ENCODE measurements at regions of chr2 and their contacts with region 1.

Region 1: DNA sequence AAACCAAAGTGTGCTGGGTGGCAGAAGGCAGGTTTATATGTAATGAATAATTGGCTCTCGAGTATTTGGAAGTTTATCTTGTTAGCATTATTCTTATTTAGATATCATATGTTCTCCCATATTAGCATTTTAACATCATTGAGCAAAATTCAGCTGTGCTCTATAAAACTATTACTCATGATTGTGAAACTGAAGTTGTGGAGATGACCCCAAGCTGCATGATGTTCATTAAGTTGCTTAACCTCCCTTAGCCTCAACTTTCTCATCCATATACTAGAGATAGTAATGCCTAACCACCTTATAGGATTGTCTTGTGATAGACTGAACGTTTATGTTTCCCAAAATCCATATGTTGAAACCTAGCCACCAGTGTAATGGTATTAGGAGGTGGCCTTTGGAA is 346.3 kb downstream of the SATB2 start:
- DNase-seq: no peak
- H3K27ac ChIP-seq: no peak overlapping the region
- CTCF ChIP-seq: no peak

Region 2: DNA sequence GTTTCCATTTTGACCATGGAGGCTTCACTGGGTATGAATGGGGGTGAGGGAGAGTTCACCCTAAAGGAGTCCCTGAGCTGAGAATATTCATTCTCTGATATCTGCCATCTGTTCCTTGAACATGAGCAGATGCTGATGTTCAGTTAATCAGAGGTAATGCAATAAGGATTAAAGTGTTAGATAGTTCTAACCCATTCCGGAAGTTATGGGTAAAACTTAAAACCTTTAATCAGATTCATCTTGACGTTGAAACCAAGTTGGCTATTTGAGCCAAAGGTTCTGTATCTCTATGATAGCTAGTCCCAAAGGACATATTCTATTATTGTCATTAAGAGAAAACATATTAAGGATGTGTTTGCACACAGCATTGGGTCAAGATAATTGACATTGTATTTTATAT is 1038.2 kb before region 1 on chr2:
- CTCF ChIA-PET with region 1: interaction called, 10 read pairs
- POLR2A ChIA-PET with region 1: no interaction called
- DNase-seq: no peak
- H3K27ac ChIP-seq: no peak overlapping the region
- CTCF ChIP-seq: no peak

Region 3: DNA sequence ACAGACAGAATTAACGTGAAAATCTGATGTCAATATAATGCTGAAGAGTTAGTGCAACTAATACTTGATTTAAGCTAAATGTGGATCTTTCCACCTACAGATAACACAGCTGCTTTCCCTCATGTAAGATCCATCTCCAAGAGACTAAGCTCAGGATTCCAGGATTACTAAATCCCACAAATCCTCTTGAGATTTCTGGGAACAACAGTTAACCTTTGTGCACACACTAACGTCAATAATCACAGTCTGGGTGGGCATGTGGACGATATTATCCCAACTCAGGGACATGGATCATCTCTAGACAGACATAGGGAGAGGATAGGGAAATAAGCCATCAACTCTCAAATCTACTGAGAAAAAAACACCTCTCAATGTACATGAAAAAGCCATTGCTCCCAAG is 86.3 kb before region 1 on chr2:
- CTCF ChIA-PET with region 1: no interaction called
- POLR2A ChIA-PET with region 1: no interaction called
- DNase-seq: no peak
- H3K27ac ChIP-seq: no peak overlapping the region
- CTCF ChIP-seq: no peak

Measured in RWPE1 (cell line).